Activated CD8-positive, alpha-beta T cell treated with anti-CD3 and anti-CD28 coated beads, Interleukin-2, amount 10 ng/mL, durations not matched to agents 7 days and 5 days (primary cell): ENCODE measurements at regions of chr5 and their contacts with region 1.

Region 1: GRCh38 chr5:142145106-142145900 is 36.7 kb downstream of the NDFIP1 start:
- DNase-seq: peak; percentile 80
- ATAC-seq: peak; percentile 89
- H3K4me3 Mint-ChIP-seq: no peak overlapping the region
- H3K27ac Mint-ChIP-seq: no peak overlapping the region
- H3K4me1 Mint-ChIP-seq: peaks cover 3% of the 10 kb centered on the region
- H3K27me3 Mint-ChIP-seq: no peaks in the 10 kb centered on the region

Region 2: DNA sequence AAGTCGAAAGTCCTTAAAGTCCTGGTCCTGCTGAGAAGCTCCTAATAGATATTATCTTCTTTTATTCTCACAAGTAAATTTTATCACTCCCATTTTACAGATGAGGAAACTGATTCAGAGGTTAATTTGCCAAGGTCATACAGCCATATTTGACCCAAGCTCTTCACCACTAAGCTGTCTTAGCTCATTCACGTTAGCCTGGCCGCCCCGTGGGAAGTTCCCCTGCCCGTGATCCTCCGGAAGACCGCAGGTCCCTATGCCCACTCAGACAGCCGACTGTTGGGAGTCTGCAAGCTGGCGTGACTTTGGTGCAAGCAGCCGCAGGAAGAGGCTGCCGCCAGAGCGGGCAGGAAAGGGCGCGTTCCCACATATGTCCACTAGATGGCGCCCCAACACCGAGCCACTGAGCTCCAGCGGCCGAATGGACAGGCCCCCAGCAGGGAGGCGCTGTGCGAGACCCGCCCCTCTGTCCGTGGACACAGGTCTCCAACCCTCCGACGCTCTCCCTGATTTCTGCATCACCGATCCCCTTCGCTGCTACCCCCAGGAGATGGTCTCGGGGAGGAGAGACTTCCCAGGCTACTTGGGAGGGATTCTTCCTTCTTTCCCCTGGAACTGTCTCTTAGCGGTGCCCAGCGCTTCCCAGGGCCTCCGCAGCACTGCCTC is 453.3 kb before region 1 on chr5:
- CTCF ChIA-PET with region 1: interaction called, 18 read pairs
- POLR2A ChIA-PET with region 1: no interaction called
- DNase-seq: peak; percentile 89
- ATAC-seq: peak; percentile 89
- H3K4me3 Mint-ChIP-seq: peak overlapping the region; percentile 71
- H3K27ac Mint-ChIP-seq: peak overlapping the region; percentile 75
- H3K4me1 Mint-ChIP-seq: peaks cover 28% of the 10 kb centered on the region
- H3K27me3 Mint-ChIP-seq: peaks cover 23% of the 10 kb centered on the region

Region 3: DNA sequence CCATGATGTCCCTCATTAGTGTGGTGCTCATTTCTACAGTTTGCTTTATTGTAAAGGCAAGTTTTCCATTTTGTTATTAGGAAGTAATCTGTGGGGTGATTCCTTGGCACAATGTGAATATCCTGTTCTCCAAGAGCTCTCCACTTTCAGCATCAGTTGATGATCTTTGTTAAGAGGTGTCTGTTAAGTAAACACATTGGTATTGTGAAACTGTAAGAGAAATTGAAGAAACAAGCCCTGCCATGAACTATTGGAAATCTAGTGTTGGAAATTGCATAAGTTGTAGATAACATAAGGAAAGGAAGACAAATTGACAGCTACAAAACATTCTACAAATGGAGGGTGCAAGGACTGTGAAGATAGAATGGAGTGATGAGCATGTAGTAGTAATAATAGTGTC is 159.2 kb before region 1 on chr5:
- CTCF ChIA-PET with region 1: interaction called, 199 read pairs
- POLR2A ChIA-PET with region 1: interaction called, 3 read pairs
- DNase-seq: no peak
- ATAC-seq: no peak
- H3K4me3 Mint-ChIP-seq: no peak overlapping the region
- H3K27ac Mint-ChIP-seq: no peak overlapping the region
- H3K4me1 Mint-ChIP-seq: peaks cover 8% of the 10 kb centered on the region
- H3K27me3 Mint-ChIP-seq: no peaks in the 10 kb centered on the region

Region 4: DNA sequence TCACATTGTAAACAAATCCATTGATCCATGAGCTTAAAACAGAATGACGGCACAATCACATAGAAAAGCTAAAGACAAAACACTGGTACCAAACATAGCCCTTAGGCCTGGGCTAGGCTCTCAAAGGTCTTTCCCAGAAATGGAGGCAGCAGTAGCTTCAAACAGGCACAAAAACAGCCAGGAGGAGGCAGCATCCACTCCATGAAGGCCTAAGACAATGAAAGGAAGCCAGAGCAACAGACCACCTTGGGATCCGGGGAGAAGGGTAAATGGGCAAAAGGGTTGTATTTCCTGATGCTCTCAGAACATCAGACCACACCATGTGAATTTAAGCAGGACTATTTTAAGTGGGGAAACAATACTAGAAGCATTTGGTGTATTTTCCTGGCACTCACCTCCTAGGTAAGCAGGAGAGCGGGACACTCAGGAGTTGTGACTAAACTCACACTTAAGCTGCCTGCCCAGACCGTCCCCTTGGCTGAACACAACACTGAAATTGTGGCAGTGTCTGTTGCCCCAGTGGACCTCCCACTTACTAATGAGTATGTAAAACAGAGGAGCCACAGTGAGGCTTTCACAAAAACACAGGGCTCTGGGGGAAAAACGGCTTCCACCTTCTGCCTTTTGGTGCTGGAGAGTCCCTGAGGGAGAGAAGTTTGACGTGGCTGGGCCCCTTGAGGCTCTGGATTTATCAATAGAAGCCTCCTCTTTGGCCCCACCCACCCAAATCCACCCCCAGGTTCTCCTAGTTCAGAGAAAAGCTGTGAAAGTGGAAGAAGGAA is 144.4 kb before region 1 on chr5:
- CTCF ChIA-PET with region 1: interaction called, 199 read pairs
- POLR2A ChIA-PET with region 1: no interaction called
- DNase-seq: no peak
- ATAC-seq: no peak
- H3K4me3 Mint-ChIP-seq: no peak overlapping the region
- H3K27ac Mint-ChIP-seq: peak overlapping the region; percentile 50
- H3K4me1 Mint-ChIP-seq: peaks cover 31% of the 10 kb centered on the region
- H3K27me3 Mint-ChIP-seq: no peaks in the 10 kb centered on the region

Region 5: GRCh38 chr5:142095651-142096330 is 49.5 kb before region 1 on chr5:
- CTCF ChIA-PET with region 1: interaction called, 10 read pairs
- POLR2A ChIA-PET with region 1: no interaction called
- DNase-seq: peak; percentile 91
- ATAC-seq: peak; percentile 90
- H3K4me3 Mint-ChIP-seq: peak overlapping the region; percentile 51
- H3K27ac Mint-ChIP-seq: peak overlapping the region; percentile 96
- H3K4me1 Mint-ChIP-seq: peaks cover 42% of the 10 kb centered on the region
- H3K27me3 Mint-ChIP-seq: no peaks in the 10 kb centered on the region

Region 6: DNA sequence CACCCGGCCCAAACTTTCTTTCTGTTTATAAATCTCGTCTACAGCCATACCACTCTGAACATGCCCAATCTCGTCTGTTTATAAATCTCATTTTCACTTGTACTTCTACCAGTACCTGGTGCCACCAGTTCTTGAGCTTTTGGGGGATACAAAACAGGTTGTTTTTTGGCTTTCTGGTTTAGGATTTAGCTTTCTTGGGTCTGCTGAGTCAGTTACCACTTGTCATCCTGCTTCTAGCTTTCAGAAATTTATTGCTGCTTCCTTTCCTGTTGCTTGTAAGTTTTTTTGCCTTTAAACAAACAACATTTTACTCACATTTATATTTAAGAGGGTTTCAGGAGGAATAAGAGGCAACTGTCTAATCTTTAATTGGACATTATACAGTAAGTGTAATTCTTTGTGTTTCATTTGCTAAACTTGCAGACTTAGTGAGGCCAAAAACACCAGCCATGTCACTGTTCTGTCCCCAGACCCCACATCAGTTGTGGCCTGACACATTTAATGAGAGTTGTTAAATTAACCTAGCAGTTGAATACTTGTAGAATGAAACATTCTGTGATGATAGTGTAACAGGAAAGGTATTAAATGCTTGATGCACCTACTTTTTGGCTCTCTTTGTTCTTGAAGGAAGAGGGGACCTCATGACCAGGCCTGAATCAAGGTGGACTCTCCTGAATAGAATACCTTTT is 24.9 kb before region 1 on chr5:
- CTCF ChIA-PET with region 1: interaction called, 10 read pairs
- POLR2A ChIA-PET with region 1: no interaction called
- DNase-seq: no peak
- ATAC-seq: peak; percentile 25
- H3K4me3 Mint-ChIP-seq: peak overlapping the region; percentile 23
- H3K27ac Mint-ChIP-seq: peak overlapping the region; percentile 65
- H3K4me1 Mint-ChIP-seq: peaks cover 51% of the 10 kb centered on the region
- H3K27me3 Mint-ChIP-seq: no peaks in the 10 kb centered on the region